Activated T-helper 2 cell treated with anti-CD3 and anti-CD28 coated beads, Interferon-gamma antibody, Interleukin-2, Interleukin-4, amounts not matched to agents 10 μg/mL and 5 μg/mL and 100 μg/mL, durations not matched to agents 14 hours and 24 hours and 36 hours (primary cell): ENCODE measurements at regions of chr11 and their contacts with region 1.

Region 1: DNA sequence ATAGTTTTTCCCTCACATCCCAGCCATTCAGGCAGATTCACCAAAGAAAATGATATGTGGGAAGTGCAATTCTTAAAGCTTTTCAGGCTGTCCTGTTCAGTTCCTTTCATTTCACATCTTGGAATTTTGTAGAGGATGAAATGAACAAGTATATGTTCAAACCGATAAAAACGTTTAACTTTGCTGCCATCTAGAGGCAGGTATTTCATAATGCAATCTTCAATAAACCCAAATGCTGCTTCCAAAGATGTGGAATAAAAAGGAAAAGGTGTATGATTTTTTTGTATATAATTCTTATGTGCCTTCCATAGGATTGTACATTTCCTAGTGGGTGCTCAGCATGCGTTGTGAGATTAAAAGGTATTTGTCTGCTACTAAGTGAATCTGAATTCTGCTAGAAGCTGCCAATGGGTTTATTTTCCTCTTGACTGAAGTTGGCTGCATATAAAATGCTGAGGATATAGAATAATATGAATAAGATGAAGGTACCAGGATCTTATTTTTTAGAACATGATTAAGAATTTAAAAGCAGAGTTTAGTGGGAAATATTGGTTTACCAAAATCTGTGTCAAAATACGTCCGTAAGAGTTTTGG is 199.3 kb downstream of the PGR start:
- DNase-seq: no peak
- H3K4me3 Mint-ChIP-seq: no peak overlapping the region
- H3K27ac Mint-ChIP-seq: no peak overlapping the region
- H3K4me1 Mint-ChIP-seq: no peaks in the 10 kb centered on the region
- H3K27me3 Mint-ChIP-seq: no peaks in the 10 kb centered on the region

Region 2: GRCh38 chr11:100687630-100688395 is 242.5 kb before region 1 on chr11:
- intact Hi-C with region 1: loop called (anchors 5 kb)
- DNase-seq: peak; percentile 9
- H3K4me3 Mint-ChIP-seq: peak overlapping the region; percentile 78
- H3K27ac Mint-ChIP-seq: no peak overlapping the region
- H3K4me1 Mint-ChIP-seq: peaks cover 4% of the 10 kb centered on the region
- H3K27me3 Mint-ChIP-seq: peaks cover 31% of the 10 kb centered on the region